ENCODE measurements at regions of chr19 and their contacts with region 1.

Region 1: DNA sequence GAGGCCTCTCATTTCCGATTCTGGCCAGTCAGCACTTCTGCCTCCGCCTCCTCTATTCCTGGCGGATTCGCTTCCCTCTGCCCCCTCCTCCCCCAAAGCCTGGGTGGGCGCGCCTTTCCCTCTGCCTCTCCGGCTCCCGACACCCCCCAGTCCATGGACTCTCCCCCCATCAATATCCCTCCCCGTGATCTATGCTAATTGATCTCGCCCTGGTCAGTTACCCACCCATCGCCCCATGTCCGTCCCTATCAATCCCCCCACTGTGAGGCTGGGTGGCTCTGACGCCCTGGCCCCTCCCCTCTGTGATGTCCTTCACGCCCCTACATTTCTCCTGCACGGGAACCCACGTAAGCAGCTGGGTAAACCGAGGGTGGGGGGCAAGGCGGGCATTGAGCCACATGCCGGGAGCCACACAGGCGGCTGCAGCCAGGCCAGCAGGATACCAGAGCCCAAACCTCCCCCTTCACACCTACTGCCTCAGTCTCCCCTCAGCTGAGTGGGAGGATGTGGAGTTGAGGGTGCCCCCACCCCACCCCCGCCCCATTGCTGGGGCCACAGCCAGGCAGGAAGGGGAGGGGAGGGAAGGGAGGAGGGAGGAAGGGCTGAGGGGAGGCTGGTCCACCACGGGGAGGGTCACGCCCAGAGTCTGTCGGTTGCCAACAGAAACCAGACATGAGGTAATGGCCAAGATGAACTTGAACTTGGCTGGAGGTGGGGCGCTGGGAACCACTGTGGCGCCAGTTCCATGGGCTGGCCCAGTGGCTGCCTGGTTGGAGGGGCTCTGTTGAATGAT is 21.0 kb downstream of the SMIM24 start:
- DNase-seq: peak; percentile 96
- H3K4me3 ChIP-seq: peak overlapping the region in 1 of 3 experiments; percentile 12
- H3K27ac ChIP-seq: peak overlapping the region; percentile 82
- H3K4me1 ChIP-seq: peaks cover 26% of the 10 kb centered on the region
- H3K27me3 ChIP-seq: no peaks in the 10 kb centered on the region
- CTCF ChIP-seq: no peak
- POLR2A ChIP-seq: no peak

Region 2: GRCh38 chr19:3365836-3366752 is 93.2 kb before region 1 on chr19 and contains the start of gene NFIC:
- CTCF ChIA-PET with region 1: no interaction called
- POLR2A ChIA-PET with region 1: no interaction called
- dilution Hi-C with region 1: no loop called
- intact Hi-C with region 1: loop called (anchors 2 kb)
- DNase-seq: peak; percentile 67
- H3K4me3 ChIP-seq: peak within 1 kb of the TSS; percentile 57 to 97 (median 75)
- H3K27ac ChIP-seq: peak within 1 kb of the TSS; percentile 60
- H3K4me1 ChIP-seq: peaks cover 26% of the 10 kb centered on the region
- H3K27me3 ChIP-seq: no peaks in the 10 kb centered on the region
- CTCF ChIP-seq: no peak
- POLR2A ChIP-seq: no peak
- total RNA-seq, gene NFIC: 131 and 133 TPM in 2 replicates

Region 3: DNA sequence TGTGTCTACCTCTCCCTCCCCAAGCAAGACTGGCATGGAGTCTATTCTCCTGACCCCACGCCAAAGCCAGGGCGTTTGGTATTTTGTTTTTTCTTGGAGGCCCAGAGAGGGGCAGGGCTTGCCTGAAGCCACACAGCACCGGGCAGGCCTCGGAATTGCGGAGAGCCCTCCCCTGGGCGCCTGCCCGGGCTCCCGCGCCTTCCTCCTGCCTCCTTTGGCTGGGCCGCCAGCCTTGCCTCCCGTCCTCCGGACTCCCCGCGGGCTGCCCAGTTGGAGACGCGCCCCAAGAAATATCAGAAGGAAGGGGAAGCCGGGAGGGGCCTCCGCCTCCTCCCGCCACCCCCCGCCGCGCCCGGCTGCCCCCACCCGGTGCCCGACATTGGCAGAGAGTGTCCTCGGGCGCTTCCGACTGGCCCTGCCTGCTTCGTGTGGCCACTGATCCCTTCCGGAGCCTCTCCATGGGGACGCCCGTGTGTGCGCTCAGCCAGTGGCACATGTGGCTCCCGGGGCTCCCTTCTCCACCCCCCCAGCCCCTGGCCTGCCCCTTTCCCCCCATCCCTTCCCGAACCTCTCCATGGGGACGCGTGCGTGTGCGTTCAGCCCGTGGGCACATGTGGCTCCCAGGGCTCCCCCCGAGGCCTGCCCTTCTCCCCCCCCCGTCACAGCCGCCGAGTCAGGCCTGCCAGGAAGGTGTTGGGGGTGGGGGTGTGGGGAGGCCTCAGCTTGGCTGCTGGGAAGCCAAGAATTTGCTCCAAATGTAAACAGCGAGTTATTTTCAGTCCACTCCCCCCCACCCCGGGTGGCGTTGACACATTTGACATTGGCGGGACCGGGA is 55.6 kb before region 1 on chr19:
- CTCF ChIA-PET with region 1: no interaction called
- POLR2A ChIA-PET with region 1: no interaction called
- dilution Hi-C with region 1: no loop called
- intact Hi-C with region 1: no loop called
- DNase-seq: peak; percentile 87
- H3K4me3 ChIP-seq: no peak overlapping the region
- H3K27ac ChIP-seq: peak overlapping the region; percentile 81
- H3K4me1 ChIP-seq: peaks cover 22% of the 10 kb centered on the region
- H3K27me3 ChIP-seq: no peaks in the 10 kb centered on the region
- CTCF ChIP-seq: no peak
- POLR2A ChIP-seq: no peak

Region 4: DNA sequence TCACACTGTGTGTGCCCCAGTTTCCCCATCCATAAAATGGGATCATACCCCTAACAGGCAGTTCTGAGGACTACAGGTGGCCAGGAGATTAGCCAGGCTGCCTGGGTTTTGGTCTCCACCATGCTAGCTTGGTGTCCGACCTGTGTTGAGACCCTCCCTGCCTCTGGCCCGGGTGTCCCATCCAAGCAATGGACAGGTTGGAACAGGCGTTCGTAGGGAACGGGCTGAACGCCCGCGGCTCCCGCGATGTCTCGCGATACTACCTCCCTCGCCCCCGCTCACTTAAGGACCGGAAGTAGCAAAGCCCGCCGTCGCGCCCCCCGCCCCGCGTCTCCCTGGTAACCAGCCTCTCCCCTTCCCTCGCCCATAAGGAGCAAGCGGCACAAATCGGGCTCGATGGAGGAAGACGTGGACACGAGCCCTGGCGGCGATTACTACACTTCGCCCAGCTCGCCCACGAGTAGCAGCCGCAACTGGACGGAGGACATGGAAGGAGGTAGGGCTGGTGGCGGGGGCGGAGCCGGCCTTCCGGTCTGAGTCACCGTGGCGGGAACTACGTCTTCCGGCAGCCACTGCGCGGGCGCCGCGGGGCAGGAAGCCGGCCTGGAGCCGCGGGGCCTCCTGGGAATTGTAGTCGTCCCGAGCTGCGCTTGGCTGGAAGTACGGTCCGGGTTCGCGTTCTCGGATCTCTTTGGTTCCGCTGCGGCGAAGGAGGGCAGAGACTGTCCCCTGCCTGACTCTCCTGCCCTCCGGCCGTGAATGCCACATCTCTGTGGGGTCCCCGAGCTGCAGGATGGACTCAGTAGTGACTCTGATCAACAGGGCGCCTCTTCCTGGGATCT is 24.4 kb before region 1 on chr19:
- CTCF ChIA-PET with region 1: interaction called, 7 read pairs
- POLR2A ChIA-PET with region 1: no interaction called
- dilution Hi-C with region 1: no loop called
- intact Hi-C with region 1: loop called (anchors 1 kb)
- DNase-seq: peak; percentile 97
- H3K4me3 ChIP-seq: peak overlapping the region in 2 of 3 experiments; percentile 42 to 51
- H3K27ac ChIP-seq: peak overlapping the region; percentile 74
- H3K4me1 ChIP-seq: peaks cover 16% of the 10 kb centered on the region
- H3K27me3 ChIP-seq: no peaks in the 10 kb centered on the region
- CTCF ChIP-seq: no peak
- POLR2A ChIP-seq: peak; percentile 83

Region 5: DNA sequence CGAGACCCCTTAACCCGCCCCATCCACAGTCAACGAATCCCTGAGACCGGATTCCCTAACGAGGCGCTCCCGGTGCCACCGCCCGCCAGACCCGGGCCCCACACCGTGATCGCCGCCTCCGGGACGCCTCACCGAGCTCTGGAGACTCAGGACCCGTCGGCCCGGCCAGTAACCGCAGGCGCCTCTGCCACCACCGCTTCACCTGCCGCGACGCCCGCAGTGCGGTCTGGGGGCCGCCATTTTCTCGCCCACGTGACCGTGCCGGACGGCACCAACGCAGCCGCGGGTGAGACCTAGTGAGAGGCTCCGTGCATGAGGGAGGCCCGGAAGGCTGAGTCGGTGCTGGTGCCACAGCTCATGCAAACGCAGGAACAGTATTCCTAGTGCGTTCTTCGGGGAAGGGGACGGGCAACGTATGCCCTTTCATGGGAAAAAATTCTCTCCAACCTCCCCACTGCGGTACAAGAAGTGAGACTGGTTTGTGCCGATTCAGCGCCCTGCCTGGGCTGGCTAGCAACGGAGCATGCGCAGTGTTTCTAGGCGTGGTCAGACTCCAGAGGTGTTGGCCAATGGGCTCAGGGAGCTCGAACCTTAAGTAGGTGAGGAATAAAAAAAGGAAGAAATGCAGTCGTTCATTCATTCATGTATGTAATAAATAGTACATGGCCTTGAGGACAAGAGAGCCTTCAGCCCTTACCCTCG is 41.3 kb after region 1 on chr19 and contains the start of gene DOHH:
- CTCF ChIA-PET with region 1: no interaction called
- POLR2A ChIA-PET with region 1: no interaction called
- dilution Hi-C with region 1: no loop called
- intact Hi-C with region 1: no loop called
- DNase-seq: peak; percentile 98
- H3K4me3 ChIP-seq: peak within 1 kb of the TSS; percentile 73 to 87 (median 80)
- H3K27ac ChIP-seq: peak within 1 kb of the TSS; percentile 87
- H3K4me1 ChIP-seq: peaks cover 9% of the 10 kb centered on the region
- H3K27me3 ChIP-seq: no peaks in the 10 kb centered on the region
- CTCF ChIP-seq: no peak
- POLR2A ChIP-seq: peak; percentile 92
- total RNA-seq, gene DOHH: 14.8 and 15.2 TPM in 2 replicates

Measured in endothelial cell of umbilical vein (primary cell).